ENCODE measurements at regions of chr11 and their contacts with region 1.

Region 1: GRCh38 chr11:103035791-103036434 is 56.0 kb downstream of the DCUN1D5 start:
- DNase-seq: peak; percentile 87
- H3K4me3 Mint-ChIP-seq: peak overlapping the region; percentile 18
- H3K27ac Mint-ChIP-seq: peak overlapping the region; percentile 79
- H3K4me1 Mint-ChIP-seq: peaks cover 18% of the 10 kb centered on the region
- H3K27me3 Mint-ChIP-seq: peaks cover 2% of the 10 kb centered on the region

Region 2: DNA sequence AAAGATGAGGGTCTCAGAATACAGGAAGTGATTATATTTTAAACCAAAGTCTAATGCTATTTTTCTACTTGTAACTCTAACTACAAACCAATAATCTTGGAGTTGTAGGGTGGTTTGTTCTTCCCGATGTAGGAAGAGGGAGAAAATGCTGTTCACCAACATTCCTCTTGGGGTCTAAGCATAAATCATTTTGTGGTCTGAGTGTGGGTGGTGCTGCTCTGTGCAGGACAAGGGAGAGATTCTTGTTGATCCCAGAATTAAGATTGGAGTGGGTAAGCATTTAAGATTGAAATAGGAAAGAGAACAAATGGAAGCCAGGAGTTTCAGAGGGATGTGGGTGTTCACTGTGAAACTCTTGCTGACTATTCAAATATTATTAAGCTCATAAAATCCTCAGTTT is 41.8 kb before region 1 on chr11:
- intact Hi-C with region 1: no loop called
- DNase-seq: no peak
- H3K4me3 Mint-ChIP-seq: no peak overlapping the region
- H3K27ac Mint-ChIP-seq: no peak overlapping the region
- H3K4me1 Mint-ChIP-seq: no peaks in the 10 kb centered on the region
- H3K27me3 Mint-ChIP-seq: peaks cover 18% of the 10 kb centered on the region

Region 3: GRCh38 chr11:103108933-103109817 is 73.3 kb after region 1 on chr11 and contains the start of gene DYNC2H1:
- intact Hi-C with region 1: loop called (anchors 1 kb)
- DNase-seq: peak; percentile 97
- H3K4me3 Mint-ChIP-seq: peak within 1 kb of the TSS; percentile 95
- H3K27ac Mint-ChIP-seq: peak within 1 kb of the TSS; percentile 89
- H3K4me1 Mint-ChIP-seq: peaks cover 10% of the 10 kb centered on the region
- H3K27me3 Mint-ChIP-seq: peaks cover 35% of the 10 kb centered on the region
- total RNA-seq, gene DYNC2H1: 0.30 and 0.64 TPM in 2 replicates